ENCODE measurements at regions of chr1 and their contacts with region 1.

Region 1: DNA sequence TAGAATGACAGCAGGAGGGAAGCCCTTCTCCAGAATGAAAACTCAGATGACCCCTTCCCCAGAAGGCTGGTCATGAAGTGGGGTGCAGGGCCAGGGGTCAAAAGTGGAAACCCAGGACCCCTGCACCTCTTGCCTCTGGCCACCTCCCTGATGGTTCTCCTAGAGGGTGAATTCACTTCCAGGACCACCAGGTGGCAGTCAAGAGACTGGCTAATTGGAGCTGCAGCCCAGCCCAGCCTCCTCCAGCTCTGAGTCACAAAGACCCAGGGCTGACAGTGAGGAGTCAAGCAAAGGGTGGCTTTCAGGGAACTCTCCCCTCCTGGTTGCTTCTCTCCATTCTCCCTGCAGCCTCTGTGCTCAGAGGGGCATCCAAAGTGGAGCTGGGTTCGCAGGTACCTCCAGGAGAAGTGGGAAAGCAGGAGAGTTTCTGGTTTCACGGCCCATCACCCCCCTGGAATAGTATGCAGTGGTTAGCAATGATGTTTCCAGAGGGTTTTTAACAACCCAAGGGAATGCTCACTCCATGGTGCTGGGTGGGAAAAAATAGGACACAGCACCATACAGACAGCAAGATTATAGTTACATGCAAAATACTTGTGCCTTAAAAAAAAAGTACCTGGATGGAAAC is 6.1 kb upstream of the EPHB2 start:
- DNase-seq: peak; percentile 88 to 93 (median 92)
- ATAC-seq: peak; percentile 92
- H3K4me3 ChIP-seq: no peak overlapping the region
- H3K27ac ChIP-seq: no peak overlapping the region
- H3K4me1 ChIP-seq: no peaks in the 10 kb centered on the region
- H3K27me3 ChIP-seq: no peaks in the 10 kb centered on the region
- CTCF ChIP-seq: peak; percentile 66 to 92 (median 88)
- POLR2A ChIP-seq: no peak

Region 2: GRCh38 chr1:22171966-22172670 is 532.4 kb before region 1 on chr1:
- intact Hi-C with region 1: no loop called
- DNase-seq: no peak
- ATAC-seq: no peak
- H3K4me3 ChIP-seq: no peak overlapping the region
- H3K27ac ChIP-seq: no peak overlapping the region
- H3K4me1 ChIP-seq: no peaks in the 10 kb centered on the region
- H3K27me3 ChIP-seq: no peaks in the 10 kb centered on the region
- CTCF ChIP-seq: no peak
- POLR2A ChIP-seq: no peak

Region 3: DNA sequence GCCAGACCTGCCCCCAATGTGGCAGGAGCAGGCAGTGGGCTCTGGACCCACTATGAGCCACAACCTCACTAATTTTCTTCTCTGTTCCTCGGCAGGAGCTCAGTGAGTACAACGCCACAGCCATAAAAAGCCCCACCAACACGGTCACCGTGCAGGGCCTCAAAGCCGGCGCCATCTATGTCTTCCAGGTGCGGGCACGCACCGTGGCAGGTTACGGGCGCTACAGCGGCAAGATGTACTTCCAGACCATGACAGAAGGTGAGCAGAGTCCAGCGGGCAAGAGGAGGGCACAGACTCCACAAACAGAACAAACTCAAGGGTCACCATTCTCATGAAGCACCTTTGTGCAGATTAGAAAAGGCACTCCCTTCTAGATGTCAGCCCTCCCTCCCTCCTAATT is 188.2 kb after region 1 on chr1:
- intact Hi-C with region 1: loop called (anchors 5 kb)
- DNase-seq: no peak
- ATAC-seq: no peak
- H3K4me3 ChIP-seq: no peak overlapping the region
- H3K27ac ChIP-seq: no peak overlapping the region
- H3K4me1 ChIP-seq: no peaks in the 10 kb centered on the region
- H3K27me3 ChIP-seq: no peaks in the 10 kb centered on the region
- CTCF ChIP-seq: no peak
- POLR2A ChIP-seq: no peak

Region 4: DNA sequence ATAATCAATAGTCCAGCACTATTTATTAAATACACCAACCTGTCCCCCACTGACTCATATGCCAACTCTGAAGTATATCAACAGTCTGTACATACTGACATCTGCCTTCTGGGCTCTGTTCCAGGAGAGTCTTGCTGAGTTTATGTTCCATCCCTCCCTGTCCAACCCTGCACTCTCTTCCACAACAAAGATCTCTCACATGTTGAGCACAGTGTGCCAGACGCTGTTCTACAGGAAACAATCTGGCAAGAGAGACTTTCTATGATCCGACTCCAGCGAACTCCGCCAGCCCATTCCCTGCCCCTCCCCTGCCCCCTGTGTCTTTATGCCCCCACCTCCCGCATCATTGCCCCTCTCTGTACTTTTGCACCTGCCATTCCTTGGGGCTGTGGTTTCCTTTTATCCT is 264.8 kb after region 1 on chr1:
- intact Hi-C with region 1: loop called (anchors 10 kb)
- DNase-seq: peak; percentile 36 to 74 (median 69)
- ATAC-seq: peak; percentile 67
- H3K4me3 ChIP-seq: no peak overlapping the region
- H3K27ac ChIP-seq: no peak overlapping the region
- H3K4me1 ChIP-seq: peaks cover 6% of the 10 kb centered on the region
- H3K27me3 ChIP-seq: no peaks in the 10 kb centered on the region
- CTCF ChIP-seq: no peak
- POLR2A ChIP-seq: no peak

Measured in body of pancreas (tissue), 4 donors.